Activated CD4-positive, alpha-beta T cell treated with anti-CD3 and anti-CD28 coated beads, Interleukin-2, amount 10 ng/mL, durations not matched to agents 24 days and 14 days (primary cell): ENCODE measurements at regions of chr7 and their contacts with region 1.

Region 1: GRCh38 chr7:104923010-104923421 is 91.0 kb upstream of the KMT2E start:
- DNase-seq: peak; percentile 93
- H3K4me3 Mint-ChIP-seq: no peak overlapping the region
- H3K27ac Mint-ChIP-seq: no peak overlapping the region
- H3K4me1 Mint-ChIP-seq: peaks cover 7% of the 10 kb centered on the region
- H3K27me3 Mint-ChIP-seq: peaks cover 4% of the 10 kb centered on the region

Region 2: DNA sequence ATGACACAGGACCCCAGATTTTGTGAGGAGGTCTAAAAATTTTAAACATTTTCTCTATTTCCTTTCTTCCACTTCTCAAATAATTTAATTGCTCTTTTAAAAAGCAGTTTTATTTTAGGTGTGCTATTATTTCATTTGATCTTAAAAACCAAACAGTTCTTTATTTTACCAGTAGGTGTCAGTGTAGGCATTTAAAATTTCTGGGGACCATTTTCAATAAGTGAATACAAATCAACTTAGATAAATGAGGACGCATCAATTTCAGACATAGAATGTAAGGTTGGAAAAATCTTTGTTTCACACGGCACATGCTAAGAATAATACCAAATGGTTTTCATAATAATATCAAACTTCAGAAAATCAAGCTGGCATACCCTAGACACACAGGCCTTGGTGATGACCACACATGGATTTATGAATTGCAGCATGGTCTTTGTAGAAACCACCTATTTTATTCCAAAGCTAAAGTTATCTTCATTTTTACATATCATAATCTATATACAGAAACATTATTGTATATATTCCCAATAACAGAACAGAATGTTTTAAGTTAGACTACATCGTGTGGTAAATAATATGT is 1349.4 kb before region 1 on chr7:
- intact Hi-C with region 1: loop called (anchors 5 kb)
- DNase-seq: no peak
- H3K4me3 Mint-ChIP-seq: no peak overlapping the region
- H3K27ac Mint-ChIP-seq: no peak overlapping the region
- H3K4me1 Mint-ChIP-seq: no peaks in the 10 kb centered on the region
- H3K27me3 Mint-ChIP-seq: peaks cover 6% of the 10 kb centered on the region

Region 3: DNA sequence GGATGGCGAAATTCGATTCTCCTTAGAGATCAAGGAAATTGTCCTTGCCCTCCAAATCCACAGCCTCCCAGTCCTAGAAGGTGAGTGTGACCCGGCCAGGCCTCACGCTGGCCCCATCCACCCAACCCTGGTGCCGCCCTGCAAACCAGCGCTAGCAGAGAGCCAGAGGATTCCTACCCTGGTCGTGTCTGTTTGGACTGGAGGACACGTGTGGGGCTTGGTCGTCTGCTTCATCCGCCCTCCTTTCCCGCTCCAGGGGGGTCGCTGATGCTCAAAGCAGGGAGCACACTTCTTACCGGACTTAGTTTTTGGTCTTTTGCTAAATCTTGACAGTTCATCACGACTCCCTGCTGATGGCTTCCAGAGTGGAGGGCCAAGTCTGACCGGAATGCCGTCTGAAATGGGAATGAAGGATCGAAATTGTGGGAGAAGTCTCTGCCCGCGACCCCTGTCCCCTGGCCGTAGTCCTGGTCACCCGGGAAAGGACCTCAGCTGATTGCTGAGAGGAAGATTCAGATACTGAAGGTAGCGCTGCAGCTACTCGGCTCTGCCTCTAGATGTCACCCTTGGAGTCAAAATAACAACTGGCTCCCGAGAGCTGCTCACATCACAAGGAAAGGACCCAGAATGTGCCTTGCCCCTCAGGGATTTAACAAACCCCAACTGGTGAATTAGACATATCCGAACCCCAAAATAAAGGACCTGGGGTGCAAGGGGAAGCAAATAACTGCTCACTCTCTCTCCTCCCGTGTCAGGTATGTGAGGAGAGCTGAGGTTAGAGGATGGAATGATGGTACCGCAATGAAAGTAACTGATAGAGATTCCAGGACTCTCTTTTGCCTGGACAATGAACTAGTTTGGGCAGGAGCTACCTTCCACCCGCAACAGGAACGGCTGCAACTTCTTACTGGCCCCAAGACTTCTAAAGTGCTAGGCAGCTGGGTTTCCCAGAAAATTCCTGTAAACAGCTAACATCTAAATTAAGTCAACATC is 691.7 kb before region 1 on chr7:
- intact Hi-C with region 1: loop called (anchors 5 kb)
- DNase-seq: peak; percentile 82
- H3K4me3 Mint-ChIP-seq: no peak overlapping the region
- H3K27ac Mint-ChIP-seq: no peak overlapping the region
- H3K4me1 Mint-ChIP-seq: peaks cover 2% of the 10 kb centered on the region
- H3K27me3 Mint-ChIP-seq: peaks cover 34% of the 10 kb centered on the region

Region 4: DNA sequence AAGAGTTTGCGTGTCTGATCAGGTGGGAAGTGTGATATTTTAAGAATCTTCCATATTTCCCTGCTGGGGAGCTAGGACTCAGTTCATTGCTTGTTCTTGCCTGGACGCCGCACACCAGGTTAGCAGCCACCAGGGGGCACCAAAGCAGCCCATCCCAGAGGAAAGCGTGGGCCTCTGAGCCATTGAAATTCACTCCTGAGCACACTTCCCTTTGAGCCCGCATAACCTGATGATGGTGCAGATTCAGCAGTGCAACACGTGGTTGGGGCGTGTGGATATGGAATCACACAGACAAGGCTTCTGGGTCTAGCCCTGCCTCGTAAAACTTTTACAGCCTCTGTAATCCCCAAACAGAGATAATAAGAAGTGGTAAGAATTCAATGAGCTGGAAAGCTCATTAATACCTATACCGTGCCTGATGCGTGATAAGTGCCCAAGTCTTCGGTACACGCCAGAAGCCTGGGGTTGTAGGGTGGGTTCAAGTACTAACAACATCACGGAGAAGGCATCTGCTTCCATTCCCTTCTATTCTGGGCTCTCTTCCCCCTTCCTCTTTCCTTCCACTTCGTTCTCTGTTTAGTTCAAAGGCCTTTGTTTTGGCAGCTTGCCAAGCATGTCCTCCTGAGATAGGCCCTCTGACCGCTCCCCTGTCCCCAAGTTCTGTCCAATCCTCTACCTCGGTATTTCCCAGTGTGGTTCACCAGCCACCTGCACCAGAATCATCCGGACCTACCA is 39.1 kb before region 1 on chr7:
- intact Hi-C with region 1: loop called (anchors 1 kb)
- DNase-seq: peak; percentile 91
- H3K4me3 Mint-ChIP-seq: no peak overlapping the region
- H3K27ac Mint-ChIP-seq: no peak overlapping the region
- H3K4me1 Mint-ChIP-seq: peaks cover 10% of the 10 kb centered on the region
- H3K27me3 Mint-ChIP-seq: peaks cover 16% of the 10 kb centered on the region

Region 5: DNA sequence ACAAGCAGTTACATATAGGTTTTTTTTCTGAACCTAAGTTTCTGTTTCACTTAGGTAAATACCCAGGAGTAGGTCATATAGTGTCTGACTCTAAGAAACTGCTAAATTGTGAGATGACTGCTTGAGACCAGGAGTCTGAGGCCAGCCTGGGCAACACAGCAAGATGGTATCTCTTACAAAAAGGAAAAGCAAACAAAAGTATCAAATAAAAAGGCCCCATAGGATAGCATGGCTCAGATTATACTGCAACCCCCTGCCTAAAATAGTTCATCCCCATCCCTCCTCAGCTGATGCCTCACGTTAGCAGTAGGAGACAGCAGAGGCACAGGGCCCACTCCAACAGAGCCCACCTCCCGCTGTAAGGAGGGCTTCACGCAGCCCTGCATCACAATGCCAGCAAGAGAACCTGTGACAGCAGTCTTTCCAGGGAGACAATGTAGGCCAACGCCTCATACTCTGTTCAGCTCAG is 375.5 kb after region 1 on chr7:
- intact Hi-C with region 1: no loop called
- DNase-seq: peak; percentile 76
- H3K4me3 Mint-ChIP-seq: peak overlapping the region; percentile 50
- H3K27ac Mint-ChIP-seq: peak overlapping the region; percentile 72
- H3K4me1 Mint-ChIP-seq: peaks cover 38% of the 10 kb centered on the region
- H3K27me3 Mint-ChIP-seq: no peaks in the 10 kb centered on the region

Region 6: DNA sequence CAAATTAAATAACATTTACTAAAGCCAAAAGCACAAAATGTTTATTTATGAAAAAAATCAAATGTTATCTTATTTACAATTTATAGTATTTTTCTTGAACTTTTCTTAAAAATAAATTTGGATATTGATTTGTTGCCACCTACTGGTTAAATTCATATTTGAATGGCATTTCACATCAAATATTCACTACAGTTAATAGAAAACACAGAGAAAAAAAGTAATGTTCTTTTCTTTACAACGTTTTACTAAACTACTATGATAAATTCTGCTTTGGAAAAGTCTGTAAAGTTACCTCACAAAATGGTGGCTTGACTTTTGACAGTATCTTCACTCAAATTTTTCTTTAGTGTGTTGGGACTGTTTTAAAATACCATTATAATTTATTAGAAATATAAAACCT is 413.0 kb after region 1 on chr7:
- intact Hi-C with region 1: loop called (anchors 5 kb)
- DNase-seq: no peak
- H3K4me3 Mint-ChIP-seq: no peak overlapping the region
- H3K27ac Mint-ChIP-seq: no peak overlapping the region
- H3K4me1 Mint-ChIP-seq: peaks cover 5% of the 10 kb centered on the region
- H3K27me3 Mint-ChIP-seq: no peaks in the 10 kb centered on the region

Region 7: GRCh38 chr7:105429746-105430612 is 507.0 kb after region 1 on chr7:
- intact Hi-C with region 1: loop called (anchors 10 kb)
- DNase-seq: peak; percentile 83
- H3K4me3 Mint-ChIP-seq: no peak overlapping the region
- H3K27ac Mint-ChIP-seq: no peak overlapping the region
- H3K4me1 Mint-ChIP-seq: peaks cover 6% of the 10 kb centered on the region
- H3K27me3 Mint-ChIP-seq: no peaks in the 10 kb centered on the region

Region 8: GRCh38 chr7:105589356-105590077 is 666.5 kb after region 1 on chr7:
- intact Hi-C with region 1: loop called (anchors 1 kb)
- DNase-seq: peak; percentile 86
- H3K4me3 Mint-ChIP-seq: no peak overlapping the region
- H3K27ac Mint-ChIP-seq: no peak overlapping the region
- H3K4me1 Mint-ChIP-seq: peaks cover 9% of the 10 kb centered on the region
- H3K27me3 Mint-ChIP-seq: peaks cover 4% of the 10 kb centered on the region